Tibial artery (tissue), 4 donors: ENCODE measurements at regions of chr5 and their contacts with region 1.

Region 1: GRCh38 chr5:34656001-34656699 is at the start of gene RAI14:
- DNase-seq: peak; percentile 77 to 90
- H3K4me3 ChIP-seq: peak within 1 kb of the TSS; percentile 82 to 99
- H3K27ac ChIP-seq: peak within 1 kb of the TSS; percentile 96
- H3K4me1 ChIP-seq: peaks cover 0 to 42% (median 17%) of the 10 kb centered on the region in 4 donors
- H3K27me3 ChIP-seq: no peaks in the 10 kb centered on the region
- CTCF ChIP-seq: no peak

Region 2: DNA sequence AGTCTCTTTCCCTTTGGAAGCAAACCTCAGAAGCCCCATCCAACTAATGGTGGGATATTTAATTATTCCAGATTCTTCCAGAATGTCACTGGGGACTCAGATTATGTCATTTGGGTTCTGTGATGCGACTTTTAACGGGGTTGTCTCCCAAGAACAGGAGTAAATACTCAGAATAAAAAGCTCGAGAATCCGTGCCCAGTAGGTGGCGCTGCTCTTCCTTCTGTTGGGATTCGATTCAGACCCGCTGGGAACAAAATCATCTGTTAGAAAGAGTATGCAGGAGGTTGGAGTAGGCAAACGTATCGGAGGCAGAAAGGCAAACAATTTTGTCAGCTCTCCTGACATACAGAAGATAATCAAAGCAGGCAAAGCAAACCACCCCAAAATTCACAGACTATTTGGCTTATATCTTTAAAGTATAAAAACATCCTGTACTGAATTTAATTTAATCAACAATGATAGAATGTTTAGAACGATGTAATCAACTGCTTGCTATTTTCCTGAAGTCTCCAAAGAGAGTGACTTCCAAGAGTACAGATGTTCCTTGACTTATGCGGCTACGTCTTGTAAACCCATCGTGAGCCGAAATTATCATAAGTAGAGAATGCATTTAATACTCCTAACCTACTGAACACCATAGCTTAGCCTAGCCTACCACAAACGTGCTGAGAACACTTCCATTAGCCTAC is 169.8 kb before region 1 on chr5:
- intact Hi-C with region 1: loop called (anchors 10 kb)
- DNase-seq: peak; percentile 81 to 89
- H3K4me3 ChIP-seq: no peak overlapping the region
- H3K27ac ChIP-seq: peak overlapping the region; percentile 65
- H3K4me1 ChIP-seq: peaks cover 0 to 49% (median 27%) of the 10 kb centered on the region in 4 donors
- H3K27me3 ChIP-seq: no peaks in the 10 kb centered on the region
- CTCF ChIP-seq: peak; percentile 75 to 83

Region 3: DNA sequence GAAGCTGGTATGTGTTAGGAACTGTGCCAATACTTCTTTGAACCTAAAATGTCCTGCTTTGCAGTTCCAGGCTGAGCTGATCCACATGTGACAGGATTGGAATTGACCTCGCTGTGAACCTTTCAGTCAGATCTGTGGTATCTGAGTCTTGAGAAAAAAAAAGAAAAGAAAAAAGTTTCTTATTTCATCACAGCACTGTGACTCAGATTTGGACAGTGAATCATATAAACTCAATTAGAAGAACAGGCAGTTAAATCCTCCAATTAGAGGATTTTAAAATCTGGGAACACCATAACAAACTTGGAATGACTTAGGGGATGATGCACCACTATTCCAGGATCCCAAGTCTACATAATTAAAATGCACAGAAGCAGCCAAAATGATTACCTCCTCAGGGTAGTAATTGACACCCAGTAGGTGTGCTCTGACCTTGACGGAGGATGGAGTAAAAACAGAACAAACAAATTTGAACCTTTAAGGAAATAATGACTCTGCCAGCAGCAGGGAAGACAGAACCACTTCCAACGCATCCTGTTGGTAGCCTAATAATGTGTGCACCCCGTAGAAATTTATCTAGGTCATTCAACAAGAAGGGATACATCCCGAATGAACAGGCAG is 57.9 kb before region 1 on chr5:
- intact Hi-C with region 1: no loop called
- DNase-seq: peak in 1 of 2 donors; percentile 29
- H3K4me3 ChIP-seq: no peak overlapping the region
- H3K27ac ChIP-seq: no peak overlapping the region
- H3K4me1 ChIP-seq: peaks cover 0 to 30% (median 15%) of the 10 kb centered on the region in 4 donors
- H3K27me3 ChIP-seq: no peaks in the 10 kb centered on the region
- CTCF ChIP-seq: no peak